ENCODE measurements at regions of chr7 and their contacts with region 1.

Region 1: GRCh38 chr7:42211938-42212337 is 25.1 kb downstream of the GLI3 start:
- DNase-seq: no peak
- ATAC-seq: no peak
- H3K4me3 ChIP-seq: no peak overlapping the region
- H3K27ac ChIP-seq: no peak overlapping the region
- H3K4me1 ChIP-seq: no peaks in the 10 kb centered on the region
- H3K27me3 ChIP-seq: no peaks in the 10 kb centered on the region
- CTCF ChIP-seq: no peak

Region 2: DNA sequence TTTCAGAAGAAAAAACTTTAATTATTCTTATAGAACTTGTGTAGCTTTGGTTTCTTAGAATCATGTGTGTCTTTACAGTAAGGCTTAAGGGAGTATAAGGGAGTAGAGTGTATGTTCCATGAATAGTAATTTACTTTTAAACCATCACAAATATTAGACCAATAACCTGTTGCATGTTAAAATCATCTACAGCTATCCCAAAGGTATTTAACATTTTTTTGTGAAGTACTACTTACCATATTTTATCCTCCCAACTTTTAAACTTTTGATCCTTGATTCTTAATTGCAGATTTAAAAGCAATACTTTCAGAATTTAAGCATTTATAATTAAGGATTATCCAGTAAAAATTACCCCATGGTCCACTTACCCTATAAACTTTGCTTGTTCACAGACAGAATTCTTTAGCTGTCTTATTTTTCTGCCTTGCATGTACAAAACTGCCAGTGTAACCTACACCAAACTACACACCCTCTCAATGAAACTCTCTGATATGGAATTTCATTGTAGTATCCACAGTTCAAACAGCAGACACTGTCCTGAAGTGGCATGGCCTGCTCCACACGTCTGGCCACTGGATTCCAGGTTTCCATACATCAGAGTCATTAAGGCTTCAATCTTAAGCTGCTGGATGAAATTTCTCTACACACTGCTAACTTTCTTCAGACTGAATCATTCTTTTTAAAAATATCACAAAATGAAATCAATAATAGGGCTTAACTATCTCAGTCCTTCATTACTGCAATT is 19.3 kb after region 1 on chr7:
- intact Hi-C with region 1: loop called in 1 of 2 experiments (anchors 2 kb)
- DNase-seq: no peak
- ATAC-seq: no peak
- H3K4me3 ChIP-seq: no peak overlapping the region
- H3K27ac ChIP-seq: no peak overlapping the region
- H3K4me1 ChIP-seq: peaks cover 9% of the 10 kb centered on the region
- H3K27me3 ChIP-seq: peaks cover 0 to 18% (median 0%) of the 10 kb centered on the region in 3 donors
- CTCF ChIP-seq: no peak

Measured in psoas muscle (tissue), 8 donors.